GM12878 (cell line): ENCODE measurements at regions of chr4 and their contacts with region 1.

Region 1: DNA sequence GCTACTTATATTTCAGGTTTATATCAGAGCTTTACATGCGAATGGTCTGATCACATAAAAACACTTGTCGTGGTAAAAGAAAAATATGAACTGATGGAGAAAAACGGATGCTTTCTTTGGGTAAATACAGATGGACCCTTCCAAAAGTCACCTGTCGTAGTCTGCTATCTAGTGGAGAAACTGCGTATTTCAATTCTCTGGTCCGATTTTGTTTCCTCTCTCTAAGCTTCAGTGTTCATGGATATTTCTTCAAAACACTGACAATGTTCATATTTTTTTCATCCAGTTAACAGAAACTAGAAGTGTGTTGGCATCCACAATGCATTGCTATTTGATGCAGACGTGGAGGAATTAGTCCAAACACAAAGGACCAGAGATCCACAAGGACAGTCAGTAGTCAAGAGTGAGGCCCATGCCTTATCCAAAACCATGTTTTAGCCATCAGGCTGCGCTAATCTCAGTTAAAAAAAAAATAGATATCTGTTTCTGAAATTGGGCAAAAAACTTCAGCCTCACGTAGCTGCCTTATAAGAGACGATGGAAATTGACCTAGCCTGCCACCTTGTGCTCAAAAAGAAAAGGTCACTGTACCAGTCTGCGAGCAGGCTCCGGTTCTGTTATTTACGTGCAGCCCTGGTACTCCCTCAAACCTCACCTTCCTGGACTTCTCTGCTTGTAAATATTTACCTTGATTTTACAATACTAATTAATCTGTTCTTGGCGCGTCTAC is 16.0 kb downstream of the MEPE start:
- DNase-seq: no peak
- ATAC-seq: peak; percentile 98
- H3K4me3 ChIP-seq: no peak overlapping the region
- H3K27ac ChIP-seq: no peak overlapping the region
- H3K4me1 ChIP-seq: no peaks in the 10 kb centered on the region
- H3K27me3 ChIP-seq: no peaks in the 10 kb centered on the region; a peak in 1 of 4 replicates
- CTCF ChIP-seq: peak; percentile 49 to 64 (median 59); a peak in 5 of 6 replicates
- EP300 ChIP-seq: no peak
- POLR2A ChIP-seq: no peak
- RAD21 ChIP-seq: peak; percentile 57

Region 2: GRCh38 chr4:87243426-87244053 is 605.2 kb before region 1 on chr4:
- CTCF ChIA-PET with region 1: no interaction called
- POLR2A ChIA-PET with region 1: no interaction called
- RAD21 ChIA-PET with region 1: no interaction called
- SMC1A ChIA-PET with region 1: no interaction called
- in situ Hi-C with region 1: no loop called
- intact Hi-C with region 1: no loop called
- DNase-seq: no peak
- ATAC-seq: no peak
- H3K4me3 ChIP-seq: no peak overlapping the region
- H3K27ac ChIP-seq: no peak overlapping the region
- H3K4me1 ChIP-seq: no peaks in the 10 kb centered on the region
- H3K27me3 ChIP-seq: 0 out of 4 replicates have a peak, but pooled peaks cover 0 to 2% of the 10 kb centered on the region in 2 experiments
- CTCF ChIP-seq: no peak
- EP300 ChIP-seq: no peak
- POLR2A ChIP-seq: no peak
- RAD21 ChIP-seq: no peak

Region 3: GRCh38 chr4:87353592-87353991 is 495.2 kb before region 1 on chr4:
- CTCF ChIA-PET with region 1: interaction called, 11 read pairs
- POLR2A ChIA-PET with region 1: no interaction called
- RAD21 ChIA-PET with region 1: no interaction called
- SMC1A ChIA-PET with region 1: no interaction called
- in situ Hi-C with region 1: loop called (anchors 5 kb)
- intact Hi-C with region 1: loop called (anchors 5 kb)
- DNase-seq: peak; percentile 13
- ATAC-seq: peak; percentile 83
- H3K4me3 ChIP-seq: no peak overlapping the region
- H3K27ac ChIP-seq: no peak overlapping the region
- H3K4me1 ChIP-seq: peaks cover 9% of the 10 kb centered on the region
- H3K27me3 ChIP-seq: no peaks in the 10 kb centered on the region
- CTCF ChIP-seq: peak; percentile 51 to 74 (median 66); a peak in 5 of 6 replicates
- EP300 ChIP-seq: no peak
- POLR2A ChIP-seq: no peak
- RAD21 ChIP-seq: peak; percentile 84

Region 4: DNA sequence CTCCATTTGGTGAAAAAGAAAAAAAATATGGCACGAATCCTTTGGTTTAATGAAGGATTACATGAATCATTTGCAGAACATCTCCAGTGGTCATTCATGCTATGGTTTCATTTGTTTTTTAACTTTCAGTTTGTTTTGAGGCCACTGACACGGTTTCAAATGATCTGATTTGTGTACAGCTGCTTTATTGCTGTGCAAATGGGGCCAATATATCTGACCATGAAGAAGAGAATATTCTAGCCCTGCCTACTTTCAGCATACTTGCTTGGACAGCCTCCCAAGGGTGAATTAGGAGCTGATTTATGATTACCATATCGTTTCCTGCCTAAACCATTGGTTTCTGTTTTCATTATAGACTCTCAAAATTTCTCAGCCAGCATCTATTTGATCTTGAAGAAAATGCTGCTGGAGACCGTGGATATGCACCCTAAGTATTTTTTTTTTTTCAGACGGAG is 350.3 kb before region 1 on chr4:
- CTCF ChIA-PET with region 1: interaction called, 7 read pairs
- POLR2A ChIA-PET with region 1: no interaction called
- RAD21 ChIA-PET with region 1: no interaction called
- SMC1A ChIA-PET with region 1: interaction called, 6 read pairs
- in situ Hi-C with region 1: loop called (anchors 10 kb)
- intact Hi-C with region 1: loop called (anchors 5 kb)
- DNase-seq: no peak
- ATAC-seq: peak; percentile 85
- H3K4me3 ChIP-seq: no peak overlapping the region
- H3K27ac ChIP-seq: no peak overlapping the region
- H3K4me1 ChIP-seq: peaks cover 4% of the 10 kb centered on the region
- H3K27me3 ChIP-seq: no peaks in the 10 kb centered on the region
- CTCF ChIP-seq: no peak
- EP300 ChIP-seq: no peak
- POLR2A ChIP-seq: no peak
- RAD21 ChIP-seq: no peak

Region 5: DNA sequence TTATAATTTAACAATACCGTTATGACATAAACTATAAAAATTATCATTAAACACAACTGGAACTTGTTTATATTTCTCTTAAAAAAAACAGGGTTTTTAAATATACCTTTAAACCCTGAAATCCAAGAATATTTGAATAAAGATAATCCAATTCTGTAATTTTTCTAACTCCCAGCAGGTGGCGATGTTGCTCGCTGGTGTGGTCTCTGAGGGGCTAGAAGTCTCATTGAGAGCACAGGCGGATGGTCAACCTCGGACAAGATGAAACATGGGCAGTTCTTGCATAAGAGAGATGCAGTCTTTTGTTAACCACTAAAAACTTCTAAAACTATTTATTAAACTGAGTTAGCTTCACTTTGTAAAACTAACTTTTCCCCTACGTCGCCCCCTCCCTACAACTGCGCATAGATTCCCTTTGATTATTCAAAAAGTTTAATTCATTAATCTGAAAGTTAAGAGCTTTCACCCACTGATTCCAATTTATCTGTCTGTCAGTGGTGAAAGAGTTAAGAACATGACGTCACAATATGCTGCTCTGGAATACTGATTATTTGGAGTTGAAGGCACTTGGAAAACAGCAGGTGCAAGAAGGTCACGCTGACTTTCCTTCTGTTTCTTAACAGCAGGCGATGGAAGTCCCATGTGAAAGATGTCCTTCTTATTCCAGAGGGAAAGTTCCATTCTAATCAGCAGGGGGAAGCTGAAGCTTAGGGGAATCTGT is 169.2 kb before region 1 on chr4:
- CTCF ChIA-PET with region 1: interaction called, 15 read pairs
- POLR2A ChIA-PET with region 1: no interaction called
- RAD21 ChIA-PET with region 1: interaction called, 5 read pairs
- SMC1A ChIA-PET with region 1: interaction called, 15 read pairs
- in situ Hi-C with region 1: no loop called
- intact Hi-C with region 1: no loop called
- DNase-seq: peak; percentile 2
- ATAC-seq: peak; percentile 61; the same call in 2 of the 3 replicates
- H3K4me3 ChIP-seq: no peak overlapping the region
- H3K27ac ChIP-seq: no peak overlapping the region
- H3K4me1 ChIP-seq: peaks cover 5% of the 10 kb centered on the region; the same call in 1 of the 2 replicates
- H3K27me3 ChIP-seq: no peaks in the 10 kb centered on the region
- CTCF ChIP-seq: peak; percentile 59 to 73 (median 66)
- EP300 ChIP-seq: no peak
- POLR2A ChIP-seq: no peak
- RAD21 ChIP-seq: peak; percentile 86

Region 6: GRCh38 chr4:87919941-87920340 is 71.2 kb after region 1 on chr4:
- CTCF ChIA-PET with region 1: no interaction called
- POLR2A ChIA-PET with region 1: no interaction called
- RAD21 ChIA-PET with region 1: no interaction called
- SMC1A ChIA-PET with region 1: no interaction called
- in situ Hi-C with region 1: no loop called
- intact Hi-C with region 1: no loop called
- DNase-seq: no peak
- ATAC-seq: no peak
- H3K4me3 ChIP-seq: no peak overlapping the region
- H3K27ac ChIP-seq: no peak overlapping the region
- H3K4me1 ChIP-seq: no peaks in the 10 kb centered on the region
- H3K27me3 ChIP-seq: no peaks in the 10 kb centered on the region
- CTCF ChIP-seq: no peak
- EP300 ChIP-seq: no peak
- POLR2A ChIP-seq: no peak
- RAD21 ChIP-seq: no peak

Region 7: DNA sequence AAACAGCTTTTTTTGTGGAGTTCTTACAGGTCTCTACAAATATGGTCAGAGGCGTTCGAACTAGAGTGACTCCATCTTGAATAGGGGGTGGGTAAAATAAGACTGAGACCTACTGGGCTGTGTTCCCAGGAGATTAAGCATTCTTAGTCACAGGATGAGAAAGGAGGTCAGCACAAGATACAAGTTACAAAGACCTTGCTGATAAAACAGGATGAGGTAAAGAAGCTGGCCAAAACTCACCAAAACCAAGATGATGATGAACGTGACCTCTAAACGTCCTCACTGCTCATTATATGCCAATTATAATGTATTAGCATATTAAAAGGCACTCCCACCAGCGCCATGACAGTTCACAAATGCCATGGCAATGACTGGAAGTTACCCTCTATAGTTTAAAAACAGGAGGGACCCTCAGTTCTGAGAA is 83.9 kb after region 1 on chr4:
- CTCF ChIA-PET with region 1: no interaction called
- POLR2A ChIA-PET with region 1: no interaction called
- RAD21 ChIA-PET with region 1: no interaction called
- SMC1A ChIA-PET with region 1: no interaction called
- in situ Hi-C with region 1: no loop called
- intact Hi-C with region 1: no loop called
- DNase-seq: no peak
- ATAC-seq: no peak
- H3K4me3 ChIP-seq: no peak overlapping the region
- H3K27ac ChIP-seq: no peak overlapping the region
- H3K4me1 ChIP-seq: no peaks in the 10 kb centered on the region
- H3K27me3 ChIP-seq: no peaks in the 10 kb centered on the region
- CTCF ChIP-seq: no peak
- EP300 ChIP-seq: no peak
- POLR2A ChIP-seq: no peak
- RAD21 ChIP-seq: no peak

Region 8: DNA sequence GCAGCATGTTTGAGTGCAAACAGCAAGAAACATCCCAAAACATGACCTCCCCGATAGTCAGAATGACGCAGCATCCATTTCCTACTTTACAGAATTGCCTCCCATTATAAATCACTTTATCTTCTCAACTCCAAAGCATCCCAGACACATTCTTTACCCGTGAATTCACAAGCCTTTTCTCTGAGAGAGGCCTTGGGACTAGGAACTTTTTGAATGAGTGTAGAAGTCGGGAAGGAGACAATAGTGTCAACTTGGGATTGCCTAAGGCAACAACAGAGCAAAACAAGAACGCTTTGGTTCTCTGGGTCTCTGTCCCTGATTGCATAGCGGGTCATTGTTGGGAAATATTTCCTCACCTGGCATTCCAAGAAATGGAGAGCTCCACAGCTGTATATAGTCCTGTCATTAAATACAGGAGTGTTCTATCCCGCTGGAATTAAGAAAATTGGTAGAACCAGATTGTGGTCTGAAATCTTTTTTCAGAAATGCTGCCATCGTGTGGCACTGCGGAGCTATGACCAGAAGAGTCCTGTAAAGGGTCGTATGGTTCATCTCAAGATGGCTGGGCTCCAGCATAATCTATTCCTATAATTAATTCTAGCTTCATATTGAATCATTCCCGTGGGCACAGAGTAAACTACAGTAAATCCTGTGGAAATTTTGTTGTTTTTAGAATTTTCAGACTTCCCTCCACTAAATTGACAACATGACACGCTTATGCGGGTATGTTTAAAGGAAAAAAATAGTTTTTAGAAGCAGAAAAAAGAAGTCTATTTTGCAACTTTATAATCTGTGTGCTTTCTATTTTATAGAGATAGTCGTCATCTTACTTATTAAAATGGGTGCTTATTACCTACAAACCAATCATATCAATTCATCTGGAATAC is 124.7 kb after region 1 on chr4:
- CTCF ChIA-PET with region 1: interaction called, 76 read pairs
- POLR2A ChIA-PET with region 1: no interaction called
- RAD21 ChIA-PET with region 1: interaction called, 9 read pairs
- SMC1A ChIA-PET with region 1: interaction called, 13 read pairs
- in situ Hi-C with region 1: no loop called
- intact Hi-C with region 1: loop called (anchors 1 kb)
- DNase-seq: no peak
- ATAC-seq: peak; percentile 93
- H3K4me3 ChIP-seq: no peak overlapping the region
- H3K27ac ChIP-seq: no peak overlapping the region
- H3K4me1 ChIP-seq: no peaks in the 10 kb centered on the region
- H3K27me3 ChIP-seq: no peaks in the 10 kb centered on the region; a peak in 1 of 4 replicates
- CTCF ChIP-seq: peak; percentile 69 to 78 (median 76)
- EP300 ChIP-seq: no peak
- POLR2A ChIP-seq: no peak
- RAD21 ChIP-seq: peak; percentile 61; the same call in 1 of the 2 replicates